Activated B cell treated with CpG ODN at 0.5 μM for 24 hours (primary cell): ENCODE measurements at regions of chr12 and their contacts with region 1.

Region 1: GRCh38 chr12:31728917-31729640 is at the start of gene AMN1:
- DNase-seq: peak; percentile 100
- ATAC-seq: peak; percentile 90
- H3K4me3 Mint-ChIP-seq: peak within 1 kb of the TSS; percentile 92
- H3K27ac Mint-ChIP-seq: peak within 1 kb of the TSS; percentile 98
- H3K4me1 Mint-ChIP-seq: peaks cover 74% of the 10 kb centered on the region
- H3K27me3 Mint-ChIP-seq: no peaks in the 10 kb centered on the region
- CTCF ChIP-seq: no peak
- total RNA-seq, gene AMN1: 13.7 and 15.5 TPM in 2 replicates

Region 2: GRCh38 chr12:31297572-31298512 is 431.2 kb before region 1 on chr12:
- CTCF ChIA-PET with region 1: no interaction called
- POLR2A ChIA-PET with region 1: no interaction called
- intact Hi-C with region 1: no loop called
- DNase-seq: no peak
- ATAC-seq: peak; percentile 22
- H3K4me3 Mint-ChIP-seq: peak overlapping the region; percentile 78
- H3K27ac Mint-ChIP-seq: peak overlapping the region; percentile 95
- H3K4me1 Mint-ChIP-seq: peaks cover 64% of the 10 kb centered on the region
- H3K27me3 Mint-ChIP-seq: no peaks in the 10 kb centered on the region
- CTCF ChIP-seq: no peak

Region 3: DNA sequence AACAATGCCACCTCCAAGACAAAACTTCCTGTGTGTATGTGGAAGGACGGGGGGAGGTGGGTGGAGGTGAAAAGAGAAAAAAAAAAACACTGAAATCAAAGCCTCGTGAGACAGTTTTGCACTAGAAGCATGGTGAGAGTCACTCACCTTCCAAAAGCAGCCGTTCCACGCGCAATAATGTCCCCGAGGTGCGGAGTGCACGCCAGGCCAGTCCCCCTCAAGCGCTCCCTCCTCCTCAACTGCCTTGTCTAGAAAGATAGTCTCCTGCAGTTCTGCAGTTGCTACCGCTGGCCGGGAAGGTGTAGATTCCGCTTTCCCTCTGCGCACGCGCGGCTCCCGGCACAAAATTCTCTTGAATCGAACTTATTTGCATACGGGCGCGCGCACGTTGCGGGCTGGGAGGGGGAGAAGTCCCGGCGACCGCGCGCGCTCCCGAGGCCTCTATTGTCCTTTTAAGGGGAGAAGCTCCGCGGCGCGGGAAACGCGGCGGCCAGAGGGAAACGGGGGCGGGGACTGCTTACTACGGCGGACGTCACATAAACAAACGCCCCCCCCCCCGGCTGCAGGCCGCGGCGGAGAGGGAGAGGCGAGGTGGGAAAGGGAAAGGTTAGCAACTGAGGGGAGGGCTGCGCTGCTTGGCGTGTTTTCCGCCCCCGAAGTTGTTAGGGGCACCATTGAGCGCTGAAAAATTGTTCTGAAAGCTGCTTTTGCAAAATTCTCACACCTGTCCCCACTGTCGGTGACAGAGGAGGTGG is 403.0 kb before region 1 on chr12 and contains the start of gene SINHCAF:
- CTCF ChIA-PET with region 1: no interaction called
- POLR2A ChIA-PET with region 1: no interaction called
- intact Hi-C with region 1: loop called (anchors 5 kb)
- DNase-seq: peak; percentile 99
- ATAC-seq: peak; percentile 62
- H3K4me3 Mint-ChIP-seq: peak within 1 kb of the TSS; percentile 96
- H3K27ac Mint-ChIP-seq: peak within 1 kb of the TSS; percentile 97
- H3K4me1 Mint-ChIP-seq: peaks cover 34% of the 10 kb centered on the region
- H3K27me3 Mint-ChIP-seq: no peaks in the 10 kb centered on the region
- CTCF ChIP-seq: no peak
- total RNA-seq, gene SINHCAF: 153 and 157 TPM in 2 replicates

Region 4: DNA sequence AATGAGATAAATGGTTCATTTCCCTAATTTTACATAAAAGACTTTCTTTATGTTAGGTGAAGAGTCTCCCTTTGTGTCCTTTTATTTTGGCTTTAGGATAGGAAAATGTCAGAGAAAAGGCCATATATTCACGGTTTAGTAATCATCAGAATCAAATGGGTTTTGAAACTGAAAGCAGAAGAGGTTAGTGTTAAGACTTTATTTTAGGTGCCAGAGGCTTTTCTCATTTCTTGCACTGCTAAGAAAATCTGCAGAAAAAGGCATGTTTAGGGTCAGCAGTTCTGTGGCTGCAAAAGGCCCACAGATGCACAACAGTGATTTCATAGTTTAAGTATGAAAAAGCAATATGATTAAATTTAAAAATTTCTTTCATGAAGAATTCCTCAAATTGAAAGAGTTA is 322.7 kb before region 1 on chr12:
- CTCF ChIA-PET with region 1: no interaction called
- POLR2A ChIA-PET with region 1: no interaction called
- intact Hi-C with region 1: no loop called
- DNase-seq: no peak
- ATAC-seq: peak; percentile 39
- H3K4me3 Mint-ChIP-seq: peak overlapping the region; percentile 65
- H3K27ac Mint-ChIP-seq: peak overlapping the region; percentile 77
- H3K4me1 Mint-ChIP-seq: peaks cover 33% of the 10 kb centered on the region
- H3K27me3 Mint-ChIP-seq: no peaks in the 10 kb centered on the region
- CTCF ChIP-seq: no peak

Region 5: DNA sequence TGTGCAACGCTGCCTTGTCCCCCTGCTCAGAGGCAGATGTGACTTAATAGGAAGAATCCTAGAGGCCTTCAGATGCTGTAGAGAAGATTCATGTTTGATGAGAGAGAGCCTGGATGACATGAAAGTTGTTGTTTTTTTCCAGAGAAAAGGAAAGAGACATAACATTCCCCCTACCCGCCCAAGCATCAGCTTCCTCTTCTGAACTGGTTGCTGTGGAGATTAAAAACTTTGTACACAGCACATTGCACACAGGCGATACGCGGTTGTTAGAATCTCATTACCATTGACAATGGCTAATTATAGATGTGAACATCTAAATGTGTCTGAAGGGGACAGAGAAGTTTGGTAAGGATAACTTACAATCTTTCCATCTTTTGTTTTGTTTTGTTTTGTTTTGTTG is 83.2 kb before region 1 on chr12:
- CTCF ChIA-PET with region 1: no interaction called
- POLR2A ChIA-PET with region 1: no interaction called
- intact Hi-C with region 1: no loop called
- DNase-seq: no peak
- ATAC-seq: peak; percentile 68
- H3K4me3 Mint-ChIP-seq: peak overlapping the region; percentile 56
- H3K27ac Mint-ChIP-seq: peak overlapping the region; percentile 37
- H3K4me1 Mint-ChIP-seq: peaks cover 30% of the 10 kb centered on the region
- H3K27me3 Mint-ChIP-seq: no peaks in the 10 kb centered on the region
- CTCF ChIP-seq: no peak

Region 6: DNA sequence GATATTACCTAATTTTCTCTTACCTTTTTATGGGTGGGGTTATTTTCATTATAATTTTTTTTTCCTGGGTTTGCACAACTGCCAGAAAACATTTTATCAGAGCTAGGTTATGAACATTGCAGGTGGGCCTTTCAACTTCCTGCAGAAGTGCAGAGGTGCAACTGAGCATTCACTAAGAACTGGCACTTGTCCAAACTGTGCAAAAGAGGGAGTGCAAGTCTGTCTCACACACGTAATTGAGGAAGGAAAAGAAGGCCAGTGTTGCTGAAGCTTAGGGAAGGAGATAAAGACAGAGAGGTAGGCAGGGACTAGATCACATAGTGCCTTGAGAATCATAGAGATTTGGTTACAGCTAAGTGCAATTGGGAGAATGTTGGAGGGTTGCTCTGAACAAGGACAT is 13.8 kb after region 1 on chr12:
- CTCF ChIA-PET with region 1: interaction called, 4 read pairs
- POLR2A ChIA-PET with region 1: interaction called, 151 read pairs
- intact Hi-C with region 1: loop called (anchors 1 kb)
- DNase-seq: no peak
- ATAC-seq: peak; percentile 40
- H3K4me3 Mint-ChIP-seq: peak overlapping the region; percentile 17
- H3K27ac Mint-ChIP-seq: peak overlapping the region; percentile 85
- H3K4me1 Mint-ChIP-seq: peaks cover 87% of the 10 kb centered on the region
- H3K27me3 Mint-ChIP-seq: no peaks in the 10 kb centered on the region
- CTCF ChIP-seq: no peak

Region 7: GRCh38 chr12:31813305-31813704 is 84.2 kb after region 1 on chr12:
- CTCF ChIA-PET with region 1: interaction called, 3 read pairs
- POLR2A ChIA-PET with region 1: interaction called, 55 read pairs
- intact Hi-C with region 1: loop called (anchors 1 kb)
- DNase-seq: no peak
- ATAC-seq: no peak
- H3K4me3 Mint-ChIP-seq: no peak overlapping the region
- H3K27ac Mint-ChIP-seq: peak overlapping the region; percentile 69
- H3K4me1 Mint-ChIP-seq: peaks cover 45% of the 10 kb centered on the region
- H3K27me3 Mint-ChIP-seq: no peaks in the 10 kb centered on the region
- CTCF ChIP-seq: no peak

Region 8: GRCh38 chr12:31874961-31875608 is 146.0 kb after region 1 on chr12:
- CTCF ChIA-PET with region 1: no interaction called
- POLR2A ChIA-PET with region 1: interaction called, 19 read pairs
- intact Hi-C with region 1: no loop called
- DNase-seq: peak; percentile 45
- ATAC-seq: peak; percentile 85
- H3K4me3 Mint-ChIP-seq: peak overlapping the region; percentile 77
- H3K27ac Mint-ChIP-seq: peak overlapping the region; percentile 100
- H3K4me1 Mint-ChIP-seq: peaks cover 77% of the 10 kb centered on the region
- H3K27me3 Mint-ChIP-seq: no peaks in the 10 kb centered on the region
- CTCF ChIP-seq: no peak

Region 9: GRCh38 chr12:32273712-32274111 is 544.6 kb after region 1 on chr12:
- CTCF ChIA-PET with region 1: no interaction called
- POLR2A ChIA-PET with region 1: interaction called, 3 read pairs
- intact Hi-C with region 1: loop called (anchors 5 kb)
- DNase-seq: peak; percentile 47
- ATAC-seq: peak; percentile 96
- H3K4me3 Mint-ChIP-seq: peak overlapping the region; percentile 77
- H3K27ac Mint-ChIP-seq: peak overlapping the region; percentile 99
- H3K4me1 Mint-ChIP-seq: peaks cover 39% of the 10 kb centered on the region
- H3K27me3 Mint-ChIP-seq: no peaks in the 10 kb centered on the region
- CTCF ChIP-seq: no peak